ENCODE measurements at regions of chr17 and their contacts with region 1.

Region 1: GRCh38 chr17:63445979-63446691 is at the start of gene CYB561:
- DNase-seq: peak; percentile 34 to 83 (median 54)
- ATAC-seq: peak; percentile 74
- H3K4me3 ChIP-seq: peak within 1 kb of the TSS; percentile 61
- H3K4me3 Mint-ChIP-seq: peak within 1 kb of the TSS; percentile 69 to 87 (median 79)
- H3K27ac ChIP-seq: peak within 1 kb of the TSS; percentile 67
- H3K27ac Mint-ChIP-seq: peak within 1 kb of the TSS; percentile 33 to 86 (median 72)
- H3K4me1 ChIP-seq: peaks cover 9 to 11% of the 10 kb centered on the region in 2 donors
- H3K4me1 Mint-ChIP-seq: peaks cover 11 to 37% (median 23%) of the 10 kb centered on the region in 7 donors
- H3K27me3 ChIP-seq: no peaks in the 10 kb centered on the region
- H3K27me3 Mint-ChIP-seq: peaks cover 0 to 24% (median 0%) of the 10 kb centered on the region in 5 donors
- total RNA-seq, gene CYB561: 5.0 to 20.4 (median 11.0) TPM

Region 2: DNA sequence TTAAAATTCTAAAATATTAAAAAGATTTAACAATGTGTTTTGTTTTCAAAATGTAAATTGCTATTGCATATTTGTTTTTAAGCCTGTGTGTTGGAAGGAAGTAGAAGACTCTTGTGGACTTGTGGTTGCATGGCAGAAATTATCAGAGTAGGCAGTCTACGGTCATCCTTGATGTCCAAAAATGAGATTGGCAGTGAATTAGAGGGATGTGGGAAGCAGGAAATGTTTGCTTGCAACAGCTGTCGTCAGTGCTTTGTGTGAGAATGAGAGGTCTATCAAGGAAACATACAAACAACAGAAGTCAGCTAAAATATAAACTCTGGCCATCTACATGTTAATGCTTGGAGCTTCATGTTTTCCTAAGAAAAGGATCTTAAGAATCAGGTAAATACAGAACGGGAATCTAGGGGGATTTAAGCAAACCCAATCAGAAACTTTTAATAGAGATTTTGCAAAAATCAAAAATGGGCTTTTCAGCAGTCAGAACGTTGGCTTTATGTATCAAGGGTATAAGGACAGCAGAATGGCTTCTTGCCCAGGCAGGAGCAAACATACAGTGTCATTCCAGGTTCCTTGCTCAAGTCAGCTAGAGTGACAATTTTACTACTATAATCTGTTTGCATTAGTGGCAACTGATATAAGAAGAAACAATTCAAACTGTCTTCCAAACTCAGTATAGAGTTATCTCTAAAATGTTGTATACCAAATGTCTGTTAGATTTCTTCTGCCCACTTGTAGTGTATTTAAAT is 196.7 kb before region 1 on chr17:
- CTCF ChIA-PET with region 1: no interaction called
- POLR2A ChIA-PET with region 1: no interaction called
- intact Hi-C with region 1: no loop called
- DNase-seq: no peak
- ATAC-seq: no peak
- H3K4me3 ChIP-seq: no peak overlapping the region
- H3K4me3 Mint-ChIP-seq: no peak overlapping the region
- H3K27ac ChIP-seq: no peak overlapping the region
- H3K27ac Mint-ChIP-seq: no peak overlapping the region
- H3K4me1 ChIP-seq: no peaks in the 10 kb centered on the region
- H3K4me1 Mint-ChIP-seq: peaks cover 0 to 3% (median 0%) of the 10 kb centered on the region in 7 donors
- H3K27me3 ChIP-seq: no peaks in the 10 kb centered on the region
- H3K27me3 Mint-ChIP-seq: peaks cover 0 to 15% (median 0%) of the 10 kb centered on the region in 5 donors

Region 3: DNA sequence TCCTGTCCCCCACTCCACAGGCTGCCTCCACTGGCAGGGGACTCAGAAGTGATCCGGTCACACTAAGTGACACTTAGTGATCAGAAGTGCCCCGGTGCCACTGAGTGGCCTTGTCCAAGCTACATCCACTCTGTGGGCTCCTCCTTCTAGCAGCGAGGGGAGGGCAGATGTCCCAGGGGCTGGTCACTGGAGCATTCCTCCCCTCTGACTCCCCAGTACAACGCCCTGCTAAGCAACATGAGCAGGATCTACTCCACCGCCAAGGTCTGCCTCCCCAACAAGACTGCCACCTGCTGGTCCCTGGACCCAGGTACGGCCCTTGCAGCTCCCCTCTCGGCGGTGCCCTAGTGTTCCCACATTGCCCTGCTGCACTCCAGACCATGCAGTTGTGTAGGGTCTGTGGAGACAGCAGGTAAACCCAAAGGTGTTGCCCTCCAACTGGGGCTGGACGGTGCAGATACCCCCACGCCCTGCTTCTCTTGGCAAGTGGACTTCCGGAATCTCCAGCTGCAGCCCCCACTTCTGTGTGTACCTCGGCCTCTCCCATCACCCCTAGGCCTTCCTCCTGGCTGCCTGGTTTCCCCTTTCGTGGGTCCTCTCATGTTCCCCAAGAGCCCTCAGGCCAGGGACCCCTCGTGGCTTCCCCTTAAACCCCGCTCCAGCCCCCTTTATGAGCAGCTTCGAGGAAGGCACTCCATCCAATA is 32.8 kb after region 1 on chr17:
- CTCF ChIA-PET with region 1: interaction called, 3 read pairs
- POLR2A ChIA-PET with region 1: no interaction called
- intact Hi-C with region 1: loop called in 1 of 2 experiments (anchors 2 kb)
- DNase-seq: peak; percentile 41 to 75 (median 59)
- ATAC-seq: peak; percentile 84
- H3K4me3 ChIP-seq: no peak overlapping the region
- H3K4me3 Mint-ChIP-seq: peak overlapping the region in 9 of 10 donors; percentile 13 to 67 (median 49)
- H3K27ac ChIP-seq: no peak overlapping the region
- H3K27ac Mint-ChIP-seq: no peak overlapping the region
- H3K4me1 ChIP-seq: peaks cover 5 to 14% of the 10 kb centered on the region in 2 donors
- H3K4me1 Mint-ChIP-seq: peaks cover 0 to 18% (median 8%) of the 10 kb centered on the region in 7 donors
- H3K27me3 ChIP-seq: peaks cover 0 to 12% of the 10 kb centered on the region in 2 donors
- H3K27me3 Mint-ChIP-seq: peaks cover 13 to 44% (median 23%) of the 10 kb centered on the region in 5 donors

Region 4: GRCh38 chr17:63600569-63601438 is 154.7 kb after region 1 on chr17 and contains the start of gene TACO1:
- CTCF ChIA-PET with region 1: interaction called, 3 read pairs
- POLR2A ChIA-PET with region 1: interaction called, 4 read pairs
- intact Hi-C with region 1: loop called in 1 of 2 experiments (anchors 1 kb)
- DNase-seq: peak; percentile 54 to 83 (median 71)
- ATAC-seq: peak; percentile 96
- H3K4me3 ChIP-seq: peak within 1 kb of the TSS; percentile 68
- H3K4me3 Mint-ChIP-seq: peak within 1 kb of the TSS; percentile 92 to 97 (median 95)
- H3K27ac ChIP-seq: peak within 1 kb of the TSS; percentile 86
- H3K27ac Mint-ChIP-seq: peak within 1 kb of the TSS; percentile 93 to 98 (median 97)
- H3K4me1 ChIP-seq: peaks cover 17 to 34% of the 10 kb centered on the region in 2 donors
- H3K4me1 Mint-ChIP-seq: peaks cover 19 to 38% (median 25%) of the 10 kb centered on the region in 7 donors
- H3K27me3 ChIP-seq: no peaks in the 10 kb centered on the region
- H3K27me3 Mint-ChIP-seq: no peaks in the 10 kb centered on the region
- total RNA-seq, gene TACO1: 11.1 to 20.3 (median 15.2) TPM

Region 5: GRCh38 chr17:63773381-63774140 is 327.4 kb after region 1 on chr17 and contains the start of gene CCDC47:
- CTCF ChIA-PET with region 1: no interaction called
- POLR2A ChIA-PET with region 1: no interaction called
- intact Hi-C with region 1: loop called in 1 of 2 experiments (anchors 5 kb)
- DNase-seq: peak; percentile 92 to 99 (median 99)
- ATAC-seq: peak; percentile 88
- H3K4me3 ChIP-seq: peak within 1 kb of the TSS; percentile 85
- H3K4me3 Mint-ChIP-seq: peak within 1 kb of the TSS; percentile 91 to 99 (median 98)
- H3K27ac ChIP-seq: peak within 1 kb of the TSS; percentile 100
- H3K27ac Mint-ChIP-seq: peak within 1 kb of the TSS; percentile 97 to 100 (median 99)
- H3K4me1 ChIP-seq: peaks cover 21 to 46% of the 10 kb centered on the region in 2 donors
- H3K4me1 Mint-ChIP-seq: peaks cover 31 to 84% (median 62%) of the 10 kb centered on the region in 7 donors
- H3K27me3 ChIP-seq: no peaks in the 10 kb centered on the region
- H3K27me3 Mint-ChIP-seq: peaks cover 0 to 7% (median 0%) of the 10 kb centered on the region in 5 donors
- total RNA-seq, gene CCDC47: 31.8 to 62.9 (median 34.7) TPM

Region 6: DNA sequence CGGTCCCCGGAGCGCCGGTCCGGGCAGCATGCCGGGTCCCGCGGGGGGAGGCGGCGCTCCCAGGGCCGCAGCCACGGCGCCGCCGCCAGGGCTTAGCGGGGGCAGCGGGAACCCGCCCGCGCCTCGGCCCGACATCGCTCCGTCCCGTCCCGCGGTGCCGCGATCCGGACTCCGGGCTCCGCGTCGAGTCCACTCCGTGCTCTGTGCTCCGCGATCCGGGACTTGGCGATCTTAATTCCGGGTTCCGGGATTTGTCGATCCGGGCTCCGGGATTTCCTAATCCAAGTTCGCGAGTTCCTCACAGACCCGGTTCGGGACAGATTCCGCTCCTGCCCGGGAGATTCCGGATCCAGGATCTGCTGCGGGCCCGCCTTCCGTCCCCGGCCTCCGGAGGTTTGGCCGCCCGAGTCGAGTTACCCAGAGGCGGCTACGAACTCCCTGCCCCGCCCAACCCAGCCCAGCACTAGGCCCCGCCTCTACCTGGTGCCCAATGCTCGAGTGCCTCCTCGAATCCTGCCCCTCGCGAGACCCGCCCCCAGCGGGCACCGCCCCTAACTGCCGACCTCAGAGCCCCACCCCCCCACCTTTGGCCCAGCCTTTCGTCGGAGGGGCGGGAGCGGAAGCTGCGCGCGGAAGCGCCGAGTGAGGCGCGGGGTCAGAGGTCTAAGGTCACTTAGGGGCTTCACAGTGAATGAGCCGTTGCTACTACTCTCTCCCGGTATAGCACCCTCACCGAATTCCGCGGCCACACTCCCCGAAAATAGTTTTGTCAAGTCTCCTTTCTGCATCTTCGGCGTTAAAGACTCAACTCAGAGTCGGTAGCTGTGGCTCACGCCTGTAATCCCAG is 396.6 kb after region 1 on chr17 and contains the start of gene SMARCD2:
- CTCF ChIA-PET with region 1: no interaction called
- POLR2A ChIA-PET with region 1: interaction called, 3 read pairs
- intact Hi-C with region 1: loop called (anchors 5 kb)
- DNase-seq: peak; percentile 94 to 99 (median 98)
- ATAC-seq: peak; percentile 96
- H3K4me3 ChIP-seq: peak within 1 kb of the TSS; percentile 87
- H3K4me3 Mint-ChIP-seq: peak within 1 kb of the TSS; percentile 92 to 98 (median 95)
- H3K27ac ChIP-seq: peak within 1 kb of the TSS; percentile 96
- H3K27ac Mint-ChIP-seq: peak within 1 kb of the TSS; percentile 87 to 95 (median 92)
- H3K4me1 ChIP-seq: peaks cover 34 to 36% of the 10 kb centered on the region in 2 donors
- H3K4me1 Mint-ChIP-seq: peaks cover 27 to 52% (median 44%) of the 10 kb centered on the region in 7 donors
- H3K27me3 ChIP-seq: no peaks in the 10 kb centered on the region
- H3K27me3 Mint-ChIP-seq: no peaks in the 10 kb centered on the region
- total RNA-seq, gene SMARCD2: 102 to 148 (median 109) TPM

Measured in naive thymus-derived CD4-positive, alpha-beta T cell (primary cell).